ENCODE measurements at regions of chr17 and their contacts with region 1.

Region 1: GRCh38 chr17:59641799-59642489 is 22.2 kb downstream of the CLTC start:
- DNase-seq: no peak
- H3K4me3 Mint-ChIP-seq: peak overlapping the region; percentile 40
- H3K27ac Mint-ChIP-seq: peak overlapping the region; percentile 48
- H3K4me1 Mint-ChIP-seq: peaks cover 34% of the 10 kb centered on the region
- H3K27me3 Mint-ChIP-seq: no peaks in the 10 kb centered on the region

Region 2: GRCh38 chr17:59601130-59601529 is 40.8 kb before region 1 on chr17:
- intact Hi-C with region 1: loop called (anchors 1 kb)
- DNase-seq: peak; percentile 23
- H3K4me3 Mint-ChIP-seq: no peak overlapping the region
- H3K27ac Mint-ChIP-seq: peak overlapping the region; percentile 43
- H3K4me1 Mint-ChIP-seq: peaks cover 19% of the 10 kb centered on the region
- H3K27me3 Mint-ChIP-seq: no peaks in the 10 kb centered on the region

Region 3: GRCh38 chr17:59719526-59719925 is 77.6 kb after region 1 on chr17:
- intact Hi-C with region 1: no loop called
- DNase-seq: no peak
- H3K4me3 Mint-ChIP-seq: no peak overlapping the region
- H3K27ac Mint-ChIP-seq: no peak overlapping the region
- H3K4me1 Mint-ChIP-seq: peaks cover 14% of the 10 kb centered on the region
- H3K27me3 Mint-ChIP-seq: no peaks in the 10 kb centered on the region